CD8-positive, alpha-beta T cell (primary cell): ENCODE measurements at regions of chr15 and their contacts with region 1.

Region 1: DNA sequence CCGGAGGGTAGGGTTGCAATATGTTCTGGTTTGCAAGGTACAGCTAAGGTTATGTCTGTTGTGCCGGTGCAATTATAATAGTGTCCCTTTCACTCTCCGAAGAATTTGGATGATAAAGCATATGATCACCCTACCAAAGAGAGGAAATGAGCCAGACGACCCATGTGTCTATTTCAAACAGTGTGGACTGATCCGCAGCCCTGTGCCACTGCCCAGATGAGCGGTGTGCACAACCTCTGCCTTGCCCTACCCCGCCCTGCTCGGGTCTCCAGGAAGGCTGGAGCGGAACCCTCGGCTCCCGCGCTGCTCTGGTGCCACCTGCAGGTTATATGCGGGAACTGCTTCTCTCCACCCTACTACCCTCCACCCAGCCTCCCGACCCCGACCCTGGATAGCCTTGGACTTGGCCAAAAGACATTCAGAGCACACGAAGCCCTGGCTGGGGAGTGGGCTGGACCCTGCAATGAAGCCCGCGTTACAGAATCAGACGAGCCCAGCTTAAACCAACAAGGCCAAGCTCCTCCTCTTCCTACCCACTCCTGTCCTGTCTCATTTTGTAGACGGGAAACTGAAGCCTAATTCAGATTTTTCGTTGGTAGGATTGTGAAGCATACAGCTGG is 68.4 kb upstream of the CHRNB4 start:
- DNase-seq: peak; percentile 34 to 76 (median 63)
- ATAC-seq: peak; percentile 88
- H3K4me3 ChIP-seq: no peak overlapping the region
- H3K4me3 Mint-ChIP-seq: no peak overlapping the region
- H3K27ac ChIP-seq: no peak overlapping the region
- H3K27ac Mint-ChIP-seq: no peak overlapping the region
- H3K4me1 ChIP-seq: no peaks in the 10 kb centered on the region
- H3K4me1 Mint-ChIP-seq: peaks cover 8% of the 10 kb centered on the region
- H3K27me3 ChIP-seq: peaks cover 0 to 3% of the 10 kb centered on the region in 2 experiments
- H3K27me3 Mint-ChIP-seq: peaks cover 27% of the 10 kb centered on the region
- CTCF ChIP-seq: peak; percentile 76

Region 2: DNA sequence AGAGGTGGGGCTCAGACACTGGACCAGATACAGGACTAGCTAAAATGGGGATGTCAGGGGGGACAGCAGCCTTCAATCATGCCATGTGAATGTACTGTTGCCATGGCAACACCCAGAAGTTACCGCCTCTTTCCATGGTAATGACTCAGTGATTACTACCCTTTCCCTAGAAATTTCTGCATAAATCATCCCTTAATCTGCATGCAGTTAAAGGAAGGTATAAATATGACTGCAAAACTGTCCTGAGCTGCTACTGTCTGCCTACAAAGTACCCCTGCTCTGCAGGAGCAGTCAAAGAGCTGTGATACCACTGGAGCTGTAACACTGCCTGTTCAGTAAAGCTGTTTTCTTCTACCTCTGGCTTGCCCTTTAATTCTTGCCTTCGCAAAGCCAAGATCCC is 1457.7 kb before region 1 on chr15:
- CTCF ChIA-PET with region 1: no interaction called
- POLR2A ChIA-PET with region 1: no interaction called
- intact Hi-C with region 1: no loop called
- DNase-seq: no peak
- ATAC-seq: no peak
- H3K4me3 ChIP-seq: no peak overlapping the region
- H3K4me3 Mint-ChIP-seq: no peak overlapping the region
- H3K27ac ChIP-seq: no peak overlapping the region
- H3K27ac Mint-ChIP-seq: no peak overlapping the region
- H3K4me1 ChIP-seq: no peaks in the 10 kb centered on the region
- H3K4me1 Mint-ChIP-seq: no peaks in the 10 kb centered on the region
- H3K27me3 ChIP-seq: no peaks in the 10 kb centered on the region
- H3K27me3 Mint-ChIP-seq: no peaks in the 10 kb centered on the region
- CTCF ChIP-seq: no peak

Region 3: DNA sequence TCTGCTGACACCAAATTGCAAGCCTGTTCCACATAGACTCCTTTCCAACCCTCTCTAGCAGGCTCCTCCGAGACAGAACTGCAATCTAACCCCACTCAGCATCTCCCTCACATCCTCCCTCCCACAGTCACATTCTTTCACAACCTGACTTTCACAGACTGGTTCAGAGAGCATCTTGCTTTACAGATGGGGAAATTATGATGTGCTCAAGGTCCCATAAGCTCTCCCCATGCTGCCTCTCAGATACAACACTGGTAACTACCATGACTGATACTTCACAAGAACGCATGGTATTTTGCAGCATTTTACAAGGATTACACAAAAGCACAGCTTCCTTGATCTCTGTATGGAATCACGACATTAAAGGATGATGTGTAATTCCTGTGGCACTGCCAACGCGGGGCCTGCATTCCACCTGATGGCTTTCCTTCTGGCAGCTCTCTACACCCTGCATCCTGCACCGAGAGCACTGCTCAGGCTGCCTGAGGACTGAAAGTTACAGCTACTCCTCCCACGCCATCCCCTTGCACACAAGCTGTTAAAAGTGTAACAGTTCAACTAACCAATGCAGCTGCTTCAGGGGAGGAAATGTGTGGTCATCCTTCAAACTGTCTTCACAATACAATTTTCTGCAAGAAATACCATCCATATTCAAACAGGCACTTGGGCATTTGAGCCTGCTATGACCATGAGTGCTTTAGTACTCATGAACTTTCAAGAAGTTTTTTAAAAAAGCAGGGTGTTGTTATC is 659.5 kb before region 1 on chr15:
- CTCF ChIA-PET with region 1: no interaction called
- POLR2A ChIA-PET with region 1: no interaction called
- intact Hi-C with region 1: no loop called
- DNase-seq: peak in 7 of 9 experiments; percentile 39 to 80 (median 59)
- ATAC-seq: peak; percentile 39
- H3K4me3 ChIP-seq: peak overlapping the region; percentile 12 to 20
- H3K4me3 Mint-ChIP-seq: peak overlapping the region; percentile 63
- H3K27ac ChIP-seq: peak overlapping the region; percentile 30 to 92
- H3K27ac Mint-ChIP-seq: peak overlapping the region; percentile 88
- H3K4me1 ChIP-seq: peaks cover 88% of the 10 kb centered on the region
- H3K4me1 Mint-ChIP-seq: peaks cover 97% of the 10 kb centered on the region
- H3K27me3 ChIP-seq: no peaks in the 10 kb centered on the region
- H3K27me3 Mint-ChIP-seq: no peaks in the 10 kb centered on the region
- CTCF ChIP-seq: no peak

Region 4: GRCh38 chr15:78308422-78309032 is 400.8 kb before region 1 on chr15:
- CTCF ChIA-PET with region 1: no interaction called
- POLR2A ChIA-PET with region 1: no interaction called
- intact Hi-C with region 1: loop called (anchors 2 to 5 kb)
- DNase-seq: peak in 8 of 9 experiments; percentile 10 to 50 (median 34)
- ATAC-seq: peak; percentile 65
- H3K4me3 ChIP-seq: no peak overlapping the region
- H3K4me3 Mint-ChIP-seq: no peak overlapping the region
- H3K27ac ChIP-seq: no peak overlapping the region
- H3K27ac Mint-ChIP-seq: no peak overlapping the region
- H3K4me1 ChIP-seq: no peaks in the 10 kb centered on the region
- H3K4me1 Mint-ChIP-seq: no peaks in the 10 kb centered on the region
- H3K27me3 ChIP-seq: no peaks in the 10 kb centered on the region
- H3K27me3 Mint-ChIP-seq: peaks cover 15% of the 10 kb centered on the region
- CTCF ChIP-seq: peak; percentile 45

Region 5: DNA sequence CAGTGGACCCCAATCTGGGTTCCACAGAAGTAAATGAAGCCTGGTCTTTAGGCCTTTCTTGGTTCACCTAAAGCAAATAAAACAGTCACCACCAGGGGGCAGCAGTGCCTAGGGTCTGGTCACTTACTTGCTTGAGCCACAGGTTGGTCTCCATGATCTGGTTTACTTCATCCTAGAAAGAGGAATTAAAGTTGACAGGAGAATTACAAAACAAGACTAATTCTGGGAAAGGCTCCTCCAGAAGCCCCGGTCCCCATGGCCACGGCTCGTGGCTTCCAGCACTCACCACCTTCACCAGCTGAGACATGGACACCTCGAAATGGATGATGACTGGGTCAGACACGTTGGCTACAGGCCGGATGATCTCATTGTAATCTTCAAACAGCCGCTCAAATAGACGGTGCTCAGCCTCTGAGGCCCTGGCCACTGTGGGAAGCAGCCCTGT is 90.9 kb before region 1 on chr15:
- CTCF ChIA-PET with region 1: interaction called, 11 read pairs
- POLR2A ChIA-PET with region 1: no interaction called
- intact Hi-C with region 1: loop called in 1 of 2 experiments (anchors 1 kb)
- DNase-seq: peak; percentile 56 to 88 (median 78)
- ATAC-seq: no peak
- H3K4me3 ChIP-seq: no peak overlapping the region
- H3K4me3 Mint-ChIP-seq: no peak overlapping the region
- H3K27ac ChIP-seq: no peak overlapping the region
- H3K27ac Mint-ChIP-seq: no peak overlapping the region
- H3K4me1 ChIP-seq: peaks cover 9% of the 10 kb centered on the region
- H3K4me1 Mint-ChIP-seq: peaks cover 16% of the 10 kb centered on the region
- H3K27me3 ChIP-seq: peaks cover 5 to 6% of the 10 kb centered on the region in 2 experiments
- H3K27me3 Mint-ChIP-seq: peaks cover 30% of the 10 kb centered on the region
- CTCF ChIP-seq: peak; percentile 72

Region 6: GRCh38 chr15:78638658-78639314 is 70.6 kb before region 1 on chr15:
- CTCF ChIA-PET with region 1: interaction called, 21 read pairs
- POLR2A ChIA-PET with region 1: no interaction called
- intact Hi-C with region 1: loop called (anchors 1 to 2 kb)
- DNase-seq: peak in 6 of 9 experiments; percentile 28 to 57 (median 42)
- ATAC-seq: peak; percentile 58
- H3K4me3 ChIP-seq: no peak overlapping the region
- H3K4me3 Mint-ChIP-seq: no peak overlapping the region
- H3K27ac ChIP-seq: no peak overlapping the region
- H3K27ac Mint-ChIP-seq: no peak overlapping the region
- H3K4me1 ChIP-seq: peaks cover 13% of the 10 kb centered on the region
- H3K4me1 Mint-ChIP-seq: peaks cover 8% of the 10 kb centered on the region
- H3K27me3 ChIP-seq: peaks cover 0 to 7% of the 10 kb centered on the region in 2 experiments
- H3K27me3 Mint-ChIP-seq: peaks cover 12% of the 10 kb centered on the region
- CTCF ChIP-seq: peak; percentile 47

Region 7: GRCh38 chr15:78830514-78831228 is 121.3 kb after region 1 on chr15:
- CTCF ChIA-PET with region 1: no interaction called
- POLR2A ChIA-PET with region 1: no interaction called
- intact Hi-C with region 1: no loop called
- DNase-seq: peak in 5 of 9 experiments; percentile 9 to 59 (median 21)
- ATAC-seq: peak; percentile 48
- H3K4me3 ChIP-seq: peak overlapping the region; percentile 49 to 52
- H3K4me3 Mint-ChIP-seq: peak overlapping the region; percentile 81
- H3K27ac ChIP-seq: no peak overlapping the region
- H3K27ac Mint-ChIP-seq: no peak overlapping the region
- H3K4me1 ChIP-seq: peaks cover 4% of the 10 kb centered on the region
- H3K4me1 Mint-ChIP-seq: peaks cover 4% of the 10 kb centered on the region
- H3K27me3 ChIP-seq: peaks cover 0 to 2% of the 10 kb centered on the region in 2 experiments
- H3K27me3 Mint-ChIP-seq: peaks cover 11% of the 10 kb centered on the region
- CTCF ChIP-seq: no peak